ENCODE measurements at regions of chr15 and their contacts with region 1.

Region 1: DNA sequence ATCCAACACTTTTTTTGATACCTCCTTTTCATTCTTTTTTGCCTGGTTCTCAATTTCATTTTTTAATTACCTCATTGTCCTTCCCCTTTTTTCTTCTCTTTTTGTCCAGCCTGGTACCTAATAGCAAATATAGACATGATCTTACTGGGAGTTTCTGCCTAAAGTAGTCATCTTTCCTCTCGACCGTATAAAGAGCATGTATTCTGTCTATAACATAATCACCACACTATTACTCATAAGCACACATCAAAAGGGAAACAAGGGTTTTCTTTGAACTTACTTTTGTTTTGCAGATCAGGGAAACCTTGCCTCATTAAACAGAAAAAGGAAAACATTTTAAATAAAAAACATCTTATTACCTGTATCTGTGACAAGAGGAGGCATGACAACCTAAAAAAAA is 33.0 kb downstream of the FAM98B start:
- DNase-seq: no peak
- H3K4me3 Mint-ChIP-seq: no peak overlapping the region
- H3K27ac Mint-ChIP-seq: peak overlapping the region; percentile 88
- H3K4me1 Mint-ChIP-seq: peaks cover 38% of the 10 kb centered on the region
- H3K27me3 Mint-ChIP-seq: no peaks in the 10 kb centered on the region

Region 2: GRCh38 chr15:37951999-37952398 is 534.9 kb before region 1 on chr15:
- intact Hi-C with region 1: no loop called
- DNase-seq: no peak
- H3K4me3 Mint-ChIP-seq: no peak overlapping the region
- H3K27ac Mint-ChIP-seq: no peak overlapping the region
- H3K4me1 Mint-ChIP-seq: no peaks in the 10 kb centered on the region
- H3K27me3 Mint-ChIP-seq: no peaks in the 10 kb centered on the region

Region 3: DNA sequence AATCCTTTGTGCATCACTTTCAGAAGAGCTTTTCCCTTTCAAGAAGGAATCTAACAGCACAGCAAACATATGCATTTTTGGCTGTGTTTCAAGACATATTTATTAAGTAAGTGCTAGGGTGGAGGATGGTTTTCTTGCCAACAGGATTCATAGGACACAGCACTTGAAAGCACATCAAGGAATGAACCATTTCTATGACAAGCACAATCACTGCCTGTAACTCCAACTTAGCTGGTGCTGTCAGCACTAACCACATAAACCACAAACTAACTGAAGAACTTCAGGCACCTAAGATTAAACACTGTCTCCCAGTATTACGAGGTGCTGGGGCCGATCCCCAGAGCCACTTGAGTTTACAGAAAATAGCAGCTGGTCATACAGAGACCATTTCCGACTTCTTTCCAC is 269.7 kb before region 1 on chr15:
- intact Hi-C with region 1: no loop called
- DNase-seq: no peak
- H3K4me3 Mint-ChIP-seq: no peak overlapping the region
- H3K27ac Mint-ChIP-seq: no peak overlapping the region
- H3K4me1 Mint-ChIP-seq: no peaks in the 10 kb centered on the region
- H3K27me3 Mint-ChIP-seq: peaks cover 12% of the 10 kb centered on the region

Region 4: GRCh38 chr15:38474155-38474757 is 12.7 kb before region 1 on chr15:
- intact Hi-C with region 1: loop called (anchors 1 kb)
- DNase-seq: no peak
- H3K4me3 Mint-ChIP-seq: no peak overlapping the region
- H3K27ac Mint-ChIP-seq: no peak overlapping the region
- H3K4me1 Mint-ChIP-seq: peaks cover 4% of the 10 kb centered on the region
- H3K27me3 Mint-ChIP-seq: no peaks in the 10 kb centered on the region